ENCODE measurements at regions of chr6 and their contacts with region 1.

Region 1: GRCh38 chr6:110589865-110590513 is 113.6 kb upstream of the SLC22A16 start:
- DNase-seq: no peak
- H3K4me3 ChIP-seq: no peak overlapping the region
- H3K27ac ChIP-seq: no peak overlapping the region
- H3K4me1 ChIP-seq: no peaks in the 10 kb centered on the region
- H3K27me3 ChIP-seq: no peaks in the 10 kb centered on the region
- CTCF ChIP-seq: no peak
- POLR2A ChIP-seq: no peak

Region 2: DNA sequence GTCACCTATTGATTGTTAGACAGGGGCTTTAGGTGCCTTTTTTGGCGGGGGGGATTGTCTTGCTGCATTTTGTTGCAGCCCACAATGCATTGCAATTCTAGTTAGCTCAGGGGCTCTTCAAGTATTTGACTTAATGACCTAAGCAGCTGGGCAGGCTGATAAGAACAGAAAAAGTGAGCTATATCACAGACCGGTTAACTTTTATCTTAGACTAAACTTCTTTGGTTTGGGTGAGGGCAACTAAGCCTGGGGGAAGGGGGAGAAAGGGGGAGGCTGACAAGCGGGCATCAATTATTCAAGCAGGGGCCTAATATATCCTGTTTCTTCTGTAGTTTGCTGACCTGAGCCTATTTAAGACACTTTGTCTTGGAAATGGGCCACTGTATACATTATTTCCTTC is 677.9 kb before region 1 on chr6:
- intact Hi-C with region 1: loop called (anchors 5 kb)
- DNase-seq: no peak
- H3K4me3 ChIP-seq: no peak overlapping the region
- H3K27ac ChIP-seq: no peak overlapping the region
- H3K4me1 ChIP-seq: no peaks in the 10 kb centered on the region
- H3K27me3 ChIP-seq: no peaks in the 10 kb centered on the region
- CTCF ChIP-seq: no peak
- POLR2A ChIP-seq: no peak